ENCODE measurements at regions of chr4 and their contacts with region 1.

Region 1: GRCh38 chr4:86895692-86896488 is 3.7 kb upstream of the C4orf36 start:
- DNase-seq: no peak
- H3K4me3 Mint-ChIP-seq: no peak overlapping the region
- H3K27ac Mint-ChIP-seq: no peak overlapping the region
- H3K4me1 Mint-ChIP-seq: no peaks in the 10 kb centered on the region
- H3K27me3 Mint-ChIP-seq: peaks cover 15% of the 10 kb centered on the region

Region 2: DNA sequence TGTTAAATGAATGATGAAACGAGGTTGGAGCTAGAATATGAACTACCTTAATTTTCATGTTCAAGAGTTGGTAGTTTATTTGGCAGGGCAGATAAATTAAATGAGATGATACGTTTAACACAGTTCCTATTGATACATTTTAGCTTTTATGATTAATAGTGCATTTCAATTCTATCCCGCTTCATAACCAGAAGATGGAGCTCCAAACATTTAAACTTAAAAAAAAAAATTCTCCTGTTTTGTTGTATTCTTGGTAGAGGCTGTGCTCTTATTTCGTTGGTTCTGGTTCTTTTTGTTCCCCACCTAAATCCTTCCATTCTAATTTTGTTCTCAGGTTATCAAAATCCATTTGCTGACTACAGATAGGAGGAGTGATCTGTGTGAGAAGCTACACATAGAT is 373.5 kb before region 1 on chr4:
- CTCF ChIA-PET with region 1: interaction called, 5 read pairs
- POLR2A ChIA-PET with region 1: no interaction called
- intact Hi-C with region 1: loop called (anchors 1 kb)
- DNase-seq: no peak
- H3K4me3 Mint-ChIP-seq: no peak overlapping the region
- H3K27ac Mint-ChIP-seq: no peak overlapping the region
- H3K4me1 Mint-ChIP-seq: no peaks in the 10 kb centered on the region
- H3K27me3 Mint-ChIP-seq: peaks cover 13% of the 10 kb centered on the region

Region 3: DNA sequence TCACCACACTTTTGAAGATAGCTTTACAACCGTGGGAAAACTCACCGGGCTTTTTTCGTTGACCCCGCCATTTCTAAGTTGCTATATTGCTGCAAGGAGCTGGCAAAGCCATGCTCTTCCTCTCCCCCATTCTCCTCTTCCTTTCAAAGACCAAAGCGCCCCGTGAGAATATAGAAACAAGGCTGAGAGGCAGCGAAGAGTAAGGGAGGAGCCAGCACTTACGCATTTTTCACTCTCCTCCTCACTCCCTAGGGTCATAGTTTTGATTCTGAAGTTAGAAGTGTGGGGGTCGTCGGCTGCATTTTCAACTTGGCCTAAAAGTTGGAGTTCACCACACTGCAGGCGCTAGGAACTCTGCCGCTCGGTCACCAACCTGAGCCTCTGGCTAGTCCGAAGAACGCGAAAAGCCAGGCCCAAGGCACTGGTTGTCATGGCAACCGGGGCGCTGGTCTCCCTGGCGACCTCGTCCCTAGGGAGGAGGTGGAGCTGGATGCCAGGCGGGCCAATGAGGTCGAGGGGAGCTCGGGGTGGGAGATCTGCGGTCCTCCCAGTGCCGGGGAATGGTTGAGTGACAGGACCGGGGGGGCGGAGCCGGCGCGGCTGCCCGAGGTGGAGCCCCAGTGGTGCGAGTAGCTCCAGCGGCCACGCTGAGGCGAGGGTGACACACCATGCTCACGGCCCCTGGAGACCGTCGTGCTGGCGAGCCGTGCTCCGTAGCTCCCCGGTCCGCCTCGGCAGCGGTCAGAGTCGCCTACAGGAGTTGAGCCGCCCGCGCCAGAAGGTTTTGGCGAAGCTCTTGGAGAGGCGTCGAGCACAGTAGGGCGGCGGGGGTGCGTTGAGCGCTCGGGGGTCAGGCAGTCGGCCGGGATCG is 302.0 kb before region 1 on chr4 and contains the start of gene PTPN13:
- CTCF ChIA-PET with region 1: no interaction called
- POLR2A ChIA-PET with region 1: no interaction called
- intact Hi-C with region 1: loop called (anchors 5 kb)
- DNase-seq: peak; percentile 84
- H3K4me3 Mint-ChIP-seq: peak within 1 kb of the TSS; percentile 73
- H3K27ac Mint-ChIP-seq: peak within 1 kb of the TSS; percentile 47
- H3K4me1 Mint-ChIP-seq: peaks cover 15% of the 10 kb centered on the region
- H3K27me3 Mint-ChIP-seq: peaks cover 39% of the 10 kb centered on the region
- total RNA-seq, gene PTPN13: 2.7 to 3.2 TPM

Region 4: GRCh38 chr4:86653237-86653865 is 242.5 kb before region 1 on chr4:
- CTCF ChIA-PET with region 1: no interaction called
- POLR2A ChIA-PET with region 1: no interaction called
- intact Hi-C with region 1: loop called (anchors 1 kb)
- DNase-seq: peak; percentile 15
- H3K4me3 Mint-ChIP-seq: no peak overlapping the region
- H3K27ac Mint-ChIP-seq: no peak overlapping the region
- H3K4me1 Mint-ChIP-seq: no peaks in the 10 kb centered on the region
- H3K27me3 Mint-ChIP-seq: no peaks in the 10 kb centered on the region

Measured in activated CD4-positive, alpha-beta memory T cell treated with anti-CD3 and anti-CD28 coated beads for 36 hours (primary cell).